Panc1 (cell line): ENCODE measurements at regions of chr12 and their contacts with region 1.

Region 1: DNA sequence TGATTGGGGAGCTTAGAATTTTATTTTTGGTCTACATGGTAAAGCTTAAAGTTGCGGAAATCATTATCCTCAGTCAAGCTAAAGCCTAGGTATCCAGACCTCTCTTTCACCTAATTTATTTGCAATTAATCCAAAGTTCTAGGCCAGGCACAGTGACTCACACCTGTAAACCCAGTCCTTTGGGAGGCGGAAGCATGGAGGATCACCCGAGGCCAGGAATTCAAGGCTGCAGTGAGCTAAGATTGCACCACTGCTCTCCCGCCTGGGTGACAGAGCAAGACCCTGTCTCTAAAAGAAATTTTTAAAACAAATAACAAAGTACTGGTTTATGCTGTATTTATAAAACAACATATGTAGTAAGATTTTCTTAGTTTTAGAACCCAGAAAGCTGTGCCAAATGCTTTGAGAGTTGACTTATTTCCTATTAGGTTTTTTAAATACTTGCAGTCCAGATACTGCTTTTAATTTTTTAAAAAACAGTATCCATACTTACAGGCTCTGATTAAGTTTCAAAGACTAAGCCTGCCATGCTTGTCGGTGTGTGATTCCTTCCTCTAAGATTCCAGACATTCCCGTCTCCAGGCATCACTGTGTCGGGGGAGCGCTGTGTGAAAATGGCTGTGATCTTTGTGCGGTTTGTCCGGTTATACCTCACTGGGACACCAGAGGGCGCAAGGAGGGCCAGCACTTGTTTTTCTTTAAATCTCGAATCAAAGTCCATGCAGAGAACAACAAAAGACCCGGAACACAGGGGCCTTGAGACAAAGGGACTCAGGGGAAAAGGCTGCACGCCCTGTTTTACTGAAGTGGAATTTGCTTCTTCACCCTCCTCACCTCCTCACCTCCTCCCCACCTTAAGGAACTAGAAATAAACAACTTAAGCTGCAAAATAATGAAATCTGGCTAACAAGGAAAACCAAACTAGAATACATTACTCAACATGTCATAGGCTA is 24.6 kb upstream of the TMPO start:
- DNase-seq: no peak
- ATAC-seq: peak; percentile 96
- H3K4me3 ChIP-seq: peak overlapping the region in 1 of 2 experiments; percentile 12; a peak in 2 of 4 replicates
- H3K27ac ChIP-seq: peak overlapping the region; percentile 83
- H3K4me1 ChIP-seq: peaks cover 3% of the 10 kb centered on the region; the same call in 1 of the 2 replicates
- H3K27me3 ChIP-seq: no peaks in the 10 kb centered on the region
- CTCF ChIP-seq: peak; percentile 95

Region 2: DNA sequence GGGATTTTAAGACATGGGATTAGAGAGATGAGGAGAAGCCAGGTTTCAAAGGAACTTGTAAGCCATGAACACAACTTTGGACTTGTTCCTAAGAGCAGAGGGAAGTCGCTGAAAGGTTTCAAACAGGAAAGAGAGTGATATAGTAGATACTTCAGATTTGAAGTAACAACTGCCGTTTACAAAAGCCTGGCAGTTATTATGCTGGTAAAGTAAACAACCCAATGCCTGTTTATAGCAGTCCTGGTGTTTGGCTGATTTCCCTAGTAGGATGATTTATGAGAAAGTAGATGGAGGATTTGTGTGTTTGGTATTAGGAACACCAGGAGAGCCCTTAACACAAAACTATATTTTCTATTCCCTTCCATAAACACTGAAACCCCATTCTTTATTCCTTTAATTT is 742.5 kb before region 1 on chr12:
- CTCF ChIA-PET with region 1: no interaction called
- POLR2A ChIA-PET with region 1: interaction called, 17 read pairs
- in situ Hi-C with region 1: no loop called
- intact Hi-C with region 1: no loop called
- DNase-seq: no peak
- ATAC-seq: no peak
- H3K4me3 ChIP-seq: no peak overlapping the region
- H3K27ac ChIP-seq: no peak overlapping the region
- H3K4me1 ChIP-seq: no peaks in the 10 kb centered on the region
- H3K27me3 ChIP-seq: no peaks in the 10 kb centered on the region
- CTCF ChIP-seq: no peak

Region 3: DNA sequence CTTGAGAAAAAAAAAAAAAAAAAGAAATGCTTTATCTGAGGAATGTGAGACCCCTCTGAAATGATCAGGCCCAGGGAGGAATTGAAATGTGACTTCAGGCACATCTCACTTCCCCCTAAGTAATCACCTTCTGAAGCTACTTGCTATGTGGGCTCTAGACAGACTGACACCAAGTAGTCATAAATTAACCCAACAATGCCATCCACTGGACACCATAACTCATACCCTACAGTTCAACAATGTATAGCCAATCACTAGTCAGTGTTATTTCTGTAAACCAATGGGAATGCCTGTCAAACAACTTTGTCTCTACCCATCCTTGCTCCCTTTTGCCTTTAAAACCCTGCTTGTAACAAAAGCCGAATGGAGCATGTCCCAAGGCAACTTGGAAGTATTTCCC is 158.1 kb before region 1 on chr12:
- CTCF ChIA-PET with region 1: no interaction called
- POLR2A ChIA-PET with region 1: no interaction called
- in situ Hi-C with region 1: no loop called
- intact Hi-C with region 1: no loop called
- DNase-seq: no peak
- ATAC-seq: no peak
- H3K4me3 ChIP-seq: no peak overlapping the region
- H3K27ac ChIP-seq: no peak overlapping the region
- H3K4me1 ChIP-seq: no peaks in the 10 kb centered on the region
- H3K27me3 ChIP-seq: peaks cover 4% of the 10 kb centered on the region; the same call in 1 of the 2 replicates
- CTCF ChIP-seq: 0 out of 2 replicates have a peak, but pooled peaks have one; percentile 4

Region 4: GRCh38 chr12:98424726-98425401 is 65.9 kb before region 1 on chr12:
- CTCF ChIA-PET with region 1: no interaction called
- POLR2A ChIA-PET with region 1: no interaction called
- in situ Hi-C with region 1: no loop called
- intact Hi-C with region 1: loop called (anchors 2 kb)
- DNase-seq: peak; percentile 35
- ATAC-seq: peak; percentile 90
- H3K4me3 ChIP-seq: no peak overlapping the region
- H3K27ac ChIP-seq: no peak overlapping the region
- H3K4me1 ChIP-seq: peaks cover 6% of the 10 kb centered on the region; the same call in 1 of the 2 replicates
- H3K27me3 ChIP-seq: no peaks in the 10 kb centered on the region
- CTCF ChIP-seq: peak; percentile 86

Region 5: DNA sequence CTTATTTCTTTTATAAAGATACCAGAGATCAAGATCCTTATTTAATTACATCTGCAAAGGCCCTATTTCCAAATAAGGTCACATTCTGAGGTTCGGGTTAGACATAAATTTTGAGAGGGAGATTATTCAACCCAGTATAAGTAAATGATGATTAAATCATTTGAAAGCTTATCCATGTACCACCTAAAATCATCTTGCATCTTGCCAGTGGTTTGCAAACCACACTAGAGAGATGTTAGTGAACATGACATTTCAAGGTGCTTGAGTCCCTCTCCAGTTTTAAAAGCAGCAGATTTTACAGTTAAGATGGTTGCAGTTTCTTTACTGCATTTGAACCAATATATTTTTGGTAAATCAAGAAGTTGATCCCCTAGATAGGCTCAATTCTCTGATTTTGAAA is 25.3 kb before region 1 on chr12:
- CTCF ChIA-PET with region 1: no interaction called
- POLR2A ChIA-PET with region 1: interaction called, 18 read pairs
- in situ Hi-C with region 1: no loop called
- intact Hi-C with region 1: no loop called
- DNase-seq: no peak
- ATAC-seq: no peak
- H3K4me3 ChIP-seq: no peak overlapping the region
- H3K27ac ChIP-seq: no peak overlapping the region
- H3K4me1 ChIP-seq: no peaks in the 10 kb centered on the region
- H3K27me3 ChIP-seq: no peaks in the 10 kb centered on the region; the same call in 1 of the 2 replicates
- CTCF ChIP-seq: no peak

Region 6: GRCh38 chr12:98516184-98516873 is 25.6 kb after region 1 on chr12:
- CTCF ChIA-PET with region 1: no interaction called
- POLR2A ChIA-PET with region 1: interaction called, 3 read pairs
- in situ Hi-C with region 1: no loop called
- intact Hi-C with region 1: loop called (anchors 2 kb)
- DNase-seq: peak; percentile 55
- ATAC-seq: peak; percentile 72
- H3K4me3 ChIP-seq: peak overlapping the region; percentile 81 to 99
- H3K27ac ChIP-seq: peak overlapping the region; percentile 98
- H3K4me1 ChIP-seq: peaks cover 27% of the 10 kb centered on the region
- H3K27me3 ChIP-seq: no peaks in the 10 kb centered on the region
- CTCF ChIP-seq: peak; percentile 89